ENCODE measurements at regions of chr5 and their contacts with region 1.

Region 1: GRCh38 chr5:177113566-177114424 is 19.8 kb upstream of the NSD1 start:
- DNase-seq: peak; percentile 53 to 78
- H3K4me3 ChIP-seq: no peak overlapping the region
- H3K27ac ChIP-seq: peak overlapping the region in 1 of 2 donors; percentile 23
- H3K4me1 ChIP-seq: no peaks in the 10 kb centered on the region
- H3K27me3 ChIP-seq: no peaks in the 10 kb centered on the region
- CTCF ChIP-seq: peak; percentile 89 to 98 (median 96)
- POLR2A ChIP-seq: no peak

Region 2: DNA sequence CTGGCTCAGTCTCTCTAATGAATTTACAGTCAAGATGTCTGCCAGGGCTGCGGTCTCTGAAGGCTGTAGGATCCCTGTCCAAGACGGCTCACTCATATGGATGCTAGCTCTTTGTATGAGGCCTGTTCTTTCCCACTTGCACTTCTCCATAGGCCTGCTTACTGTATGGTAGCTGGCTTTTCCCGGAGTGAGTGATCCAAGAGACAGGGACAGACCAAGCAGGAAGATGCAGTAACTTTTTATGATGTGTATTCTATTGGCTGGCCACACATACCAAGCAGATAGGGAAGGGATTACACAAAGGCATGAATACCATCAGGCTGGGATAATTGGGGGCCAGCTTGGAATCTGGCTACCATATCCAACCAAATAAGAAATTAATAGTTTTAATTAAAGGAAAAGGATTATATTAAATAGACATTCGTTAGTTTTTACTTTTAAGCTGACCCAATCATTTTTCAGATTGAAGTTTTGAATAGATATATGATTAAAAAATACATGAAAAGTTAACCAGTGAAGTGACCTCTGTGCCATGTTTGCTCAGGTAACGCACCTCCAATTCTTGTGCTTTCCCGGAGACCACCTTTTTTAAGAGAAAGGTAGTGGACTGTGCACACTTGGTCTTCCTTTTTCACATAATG is 40.3 kb after region 1 on chr5:
- intact Hi-C with region 1: loop called (anchors 2 kb)
- DNase-seq: no peak
- H3K4me3 ChIP-seq: no peak overlapping the region
- H3K27ac ChIP-seq: no peak overlapping the region
- H3K4me1 ChIP-seq: no peaks in the 10 kb centered on the region
- H3K27me3 ChIP-seq: no peaks in the 10 kb centered on the region
- CTCF ChIP-seq: no peak
- POLR2A ChIP-seq: no peak

Region 3: DNA sequence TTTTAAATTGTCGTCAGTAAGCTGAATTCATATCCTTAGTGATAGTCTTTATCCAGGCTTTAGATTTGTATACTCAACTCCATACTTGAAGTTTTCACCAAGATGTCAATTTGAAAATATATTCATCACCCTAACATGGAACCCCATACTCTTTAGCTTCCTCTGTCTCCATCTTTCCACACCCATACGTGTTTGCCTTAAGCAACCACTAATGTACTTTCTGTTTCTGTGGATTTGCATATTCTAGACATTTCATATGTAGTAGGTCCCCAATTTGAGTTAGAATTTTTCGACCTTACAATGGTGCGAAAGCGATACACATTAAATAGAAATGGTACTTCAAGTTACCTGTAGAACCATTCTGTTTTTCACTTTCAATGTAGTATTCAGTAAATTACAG is 84.9 kb after region 1 on chr5:
- intact Hi-C with region 1: no loop called
- DNase-seq: no peak
- H3K4me3 ChIP-seq: no peak overlapping the region
- H3K27ac ChIP-seq: no peak overlapping the region
- H3K4me1 ChIP-seq: no peaks in the 10 kb centered on the region
- H3K27me3 ChIP-seq: no peaks in the 10 kb centered on the region
- CTCF ChIP-seq: no peak
- POLR2A ChIP-seq: no peak

Region 4: GRCh38 chr5:177317959-177318377 is 204.2 kb after region 1 on chr5:
- intact Hi-C with region 1: loop called (anchors 5 kb)
- DNase-seq: peak; percentile 67 to 75
- H3K4me3 ChIP-seq: no peak overlapping the region
- H3K27ac ChIP-seq: no peak overlapping the region
- H3K4me1 ChIP-seq: no peaks in the 10 kb centered on the region
- H3K27me3 ChIP-seq: no peaks in the 10 kb centered on the region
- CTCF ChIP-seq: peak; percentile 79 to 88 (median 81)
- POLR2A ChIP-seq: no peak

Measured in breast epithelium (tissue), 4 donors.